AG04449 (cell line): ENCODE measurements at regions of chr6 and their contacts with region 1.

Region 1: GRCh38 chr6:158972241-158973233 is 27.5 kb downstream of the RSPH3 start:
- DNase-seq: no peak
- H3K4me3 ChIP-seq: no peak overlapping the region
- CTCF ChIP-seq: no peak

Region 2: GRCh38 chr6:158704181-158704822 is 268.2 kb before region 1 on chr6:
- CTCF ChIA-PET with region 1: interaction called, 92 read pairs
- POLR2A ChIA-PET with region 1: no interaction called
- DNase-seq: no peak
- H3K4me3 ChIP-seq: peak overlapping the region; percentile 63
- CTCF ChIP-seq: peak; percentile 99

Region 3: GRCh38 chr6:158718461-158719046 is 254.0 kb before region 1 on chr6:
- CTCF ChIA-PET with region 1: interaction called, 20 read pairs
- POLR2A ChIA-PET with region 1: no interaction called
- DNase-seq: no peak
- H3K4me3 ChIP-seq: no peak overlapping the region
- CTCF ChIP-seq: peak; percentile 56

Region 4: GRCh38 chr6:158772851-158773371 is 199.6 kb before region 1 on chr6:
- CTCF ChIA-PET with region 1: interaction called, 23 read pairs
- POLR2A ChIA-PET with region 1: no interaction called
- DNase-seq: peak; percentile 5
- H3K4me3 ChIP-seq: no peak overlapping the region
- CTCF ChIP-seq: no peak

Region 5: DNA sequence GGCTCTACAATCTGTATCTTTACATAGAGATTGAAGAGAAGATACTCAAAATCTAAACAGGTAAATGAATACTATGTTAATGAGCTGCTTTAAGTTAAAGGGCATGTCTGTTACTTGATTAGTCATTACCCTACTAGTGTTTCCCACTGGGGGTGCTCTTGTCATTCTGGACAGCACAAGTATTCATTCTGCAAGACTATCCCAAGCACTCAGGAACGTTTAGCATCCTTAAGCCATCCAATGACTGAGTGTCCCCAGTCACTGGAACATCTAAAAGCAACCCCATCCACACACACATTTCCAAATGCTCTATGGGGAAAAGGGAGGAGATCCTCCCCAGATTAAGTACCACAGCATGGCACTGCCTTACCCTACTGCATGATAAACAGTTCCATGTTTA is 179.1 kb before region 1 on chr6:
- CTCF ChIA-PET with region 1: interaction called, 132 read pairs
- POLR2A ChIA-PET with region 1: interaction called, 3 read pairs
- DNase-seq: peak; percentile 12
- H3K4me3 ChIP-seq: no peak overlapping the region
- CTCF ChIP-seq: peak; percentile 59

Region 6: GRCh38 chr6:158958504-158959386 is 13.8 kb before region 1 on chr6:
- CTCF ChIA-PET with region 1: interaction called, 24 read pairs
- POLR2A ChIA-PET with region 1: no interaction called
- DNase-seq: no peak
- H3K4me3 ChIP-seq: no peak overlapping the region
- CTCF ChIP-seq: no peak

Region 7: DNA sequence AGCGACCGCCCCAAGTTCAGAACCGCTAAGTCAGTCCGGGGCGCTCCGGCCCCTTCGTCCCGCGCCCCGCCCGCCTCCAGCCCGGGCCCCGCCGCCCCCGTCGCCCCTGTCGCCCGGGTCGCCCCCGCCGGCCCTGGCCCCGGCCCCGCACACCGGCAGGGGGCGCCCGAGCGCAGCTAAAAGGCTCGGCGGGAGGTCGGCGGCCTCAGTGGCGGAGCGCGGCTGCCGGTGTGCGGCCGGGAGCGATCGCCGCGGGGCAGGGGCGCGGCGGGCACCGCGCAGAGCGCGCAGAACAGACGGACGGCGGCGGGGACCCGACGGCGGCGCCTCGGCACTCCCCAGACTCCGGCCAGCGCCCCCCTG is 196.6 kb after region 1 on chr6 and contains the start of gene FNDC1:
- CTCF ChIA-PET with region 1: no interaction called
- POLR2A ChIA-PET with region 1: no interaction called
- DNase-seq: no peak
- H3K4me3 ChIP-seq: peak within 1 kb of the TSS; percentile 43
- CTCF ChIP-seq: peak; percentile 48